ENCODE measurements at regions of chr2 and their contacts with region 1.

Region 1: GRCh38 chr2:74876081-74876886 is 42.4 kb downstream of the HK2 start:
- DNase-seq: no peak
- ATAC-seq: peak; percentile 94
- H3K4me3 ChIP-seq: no peak overlapping the region
- H3K27ac ChIP-seq: no peak overlapping the region
- H3K4me1 ChIP-seq: no peaks in the 10 kb centered on the region
- H3K27me3 ChIP-seq: no peaks in the 10 kb centered on the region
- CTCF ChIP-seq: peak; percentile 79

Region 2: GRCh38 chr2:74690571-74690970 is 185.7 kb before region 1 on chr2:
- CTCF ChIA-PET with region 1: interaction called, 6 read pairs
- POLR2A ChIA-PET with region 1: no interaction called
- in situ Hi-C with region 1: no loop called
- intact Hi-C with region 1: loop called (anchors 1 kb)
- DNase-seq: peak; percentile 71
- ATAC-seq: peak; percentile 93
- H3K4me3 ChIP-seq: no peak overlapping the region
- H3K27ac ChIP-seq: no peak overlapping the region
- H3K4me1 ChIP-seq: no peaks in the 10 kb centered on the region
- H3K27me3 ChIP-seq: peaks cover 5% of the 10 kb centered on the region; the same call in 1 of the 2 replicates
- CTCF ChIP-seq: peak; percentile 76

Region 3: GRCh38 chr2:74715078-74715791 is 161.0 kb before region 1 on chr2:
- CTCF ChIA-PET with region 1: interaction called, 4 read pairs
- POLR2A ChIA-PET with region 1: no interaction called
- in situ Hi-C with region 1: no loop called
- intact Hi-C with region 1: loop called (anchors 1 kb)
- DNase-seq: peak; percentile 67
- ATAC-seq: peak; percentile 97
- H3K4me3 ChIP-seq: peak overlapping the region; percentile 53 to 71
- H3K27ac ChIP-seq: no peak overlapping the region
- H3K4me1 ChIP-seq: peaks cover 3% of the 10 kb centered on the region; the same call in 1 of the 2 replicates
- H3K27me3 ChIP-seq: peaks cover 21% of the 10 kb centered on the region
- CTCF ChIP-seq: peak; percentile 95

Measured in Panc1 (cell line).